GM10248 (cell line): ENCODE measurements at regions of chr12 and their contacts with region 1.

Region 1: DNA sequence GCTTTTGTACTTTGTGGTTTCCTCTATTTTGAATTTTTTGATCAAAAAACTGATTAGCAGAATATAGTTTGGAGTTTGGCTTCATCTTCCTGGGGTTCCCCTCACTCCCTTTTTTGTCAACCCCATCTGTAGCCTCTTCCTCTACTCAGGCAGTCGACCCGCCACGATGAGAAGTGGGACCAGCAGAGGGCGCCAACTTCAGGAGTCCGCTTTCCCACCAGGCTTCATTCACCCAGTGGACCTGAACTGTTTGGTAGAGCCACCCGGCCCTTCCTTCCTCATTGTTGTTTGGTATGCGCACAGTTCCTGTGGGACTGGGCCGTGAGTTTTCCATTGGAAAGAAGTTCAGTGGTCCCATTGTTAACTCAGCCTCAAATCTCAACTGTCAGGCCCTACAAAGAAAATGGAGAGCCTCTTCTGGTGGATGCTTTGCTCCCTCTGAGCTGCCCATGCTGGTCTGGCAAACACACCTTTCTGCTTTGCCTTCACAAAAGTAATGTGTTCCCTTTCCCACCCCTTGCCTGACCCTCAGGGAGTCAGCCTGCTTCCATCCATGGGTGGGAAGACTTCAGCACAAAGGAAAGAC is 21.7 kb downstream of the TMBIM6 start:
- DNase-seq: peak; percentile 78
- CTCF ChIP-seq: peak; percentile 85

Region 2: DNA sequence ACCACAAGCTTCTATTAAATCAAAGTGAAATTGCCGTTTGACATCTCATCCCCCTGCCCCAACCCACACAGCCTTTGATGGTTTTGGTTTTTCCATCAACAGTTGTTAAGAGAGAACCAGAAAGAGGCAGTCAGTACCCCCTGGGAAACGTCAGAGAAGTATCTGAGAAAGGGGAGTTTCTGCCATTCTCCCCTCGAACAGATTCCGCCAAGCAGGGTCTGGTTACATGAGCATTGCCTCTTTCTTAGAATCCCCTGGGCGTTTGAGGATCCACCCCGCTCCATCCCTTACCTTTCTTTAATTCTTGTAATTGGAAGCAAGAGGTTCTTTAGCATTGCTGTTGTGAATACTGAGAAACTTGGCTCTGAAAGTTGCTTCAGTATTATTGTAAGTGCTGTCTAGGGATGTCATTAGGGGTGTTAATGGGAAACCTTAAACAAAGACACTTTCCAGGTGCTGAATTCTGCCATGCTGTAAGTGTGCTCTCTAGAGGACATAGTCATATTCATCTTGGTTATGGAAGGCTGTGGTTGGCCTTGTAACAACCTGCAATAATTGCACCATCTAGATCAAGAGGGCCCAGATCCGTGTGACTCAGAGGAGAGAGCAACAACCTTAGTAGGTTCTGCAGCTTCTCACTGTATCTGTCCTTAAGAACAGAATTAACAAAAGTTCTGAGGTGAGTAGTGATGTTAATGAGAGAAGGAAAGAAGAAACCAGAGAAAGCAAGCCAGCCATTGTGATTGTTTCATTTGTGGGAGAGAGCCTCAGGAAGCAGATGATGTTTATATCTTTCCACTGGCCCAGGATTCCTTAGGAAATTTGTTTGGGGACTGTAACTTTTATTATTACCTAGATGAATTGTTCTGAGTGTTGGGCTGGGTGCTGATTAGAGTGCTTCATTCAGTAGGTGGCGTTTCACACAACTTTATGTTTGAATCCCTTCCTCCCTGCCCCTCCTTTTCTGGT is 12.8 kb before region 1 on chr12:
- CTCF ChIA-PET with region 1: interaction called, 51 read pairs
- POLR2A ChIA-PET with region 1: interaction called, 5 read pairs
- DNase-seq: no peak
- CTCF ChIP-seq: peak; percentile 21

Region 3: GRCh38 chr12:49776413-49776812 is 13.3 kb after region 1 on chr12:
- CTCF ChIA-PET with region 1: interaction called, 47 read pairs
- POLR2A ChIA-PET with region 1: no interaction called
- DNase-seq: peak; percentile 78
- CTCF ChIP-seq: peak; percentile 79

Region 4: DNA sequence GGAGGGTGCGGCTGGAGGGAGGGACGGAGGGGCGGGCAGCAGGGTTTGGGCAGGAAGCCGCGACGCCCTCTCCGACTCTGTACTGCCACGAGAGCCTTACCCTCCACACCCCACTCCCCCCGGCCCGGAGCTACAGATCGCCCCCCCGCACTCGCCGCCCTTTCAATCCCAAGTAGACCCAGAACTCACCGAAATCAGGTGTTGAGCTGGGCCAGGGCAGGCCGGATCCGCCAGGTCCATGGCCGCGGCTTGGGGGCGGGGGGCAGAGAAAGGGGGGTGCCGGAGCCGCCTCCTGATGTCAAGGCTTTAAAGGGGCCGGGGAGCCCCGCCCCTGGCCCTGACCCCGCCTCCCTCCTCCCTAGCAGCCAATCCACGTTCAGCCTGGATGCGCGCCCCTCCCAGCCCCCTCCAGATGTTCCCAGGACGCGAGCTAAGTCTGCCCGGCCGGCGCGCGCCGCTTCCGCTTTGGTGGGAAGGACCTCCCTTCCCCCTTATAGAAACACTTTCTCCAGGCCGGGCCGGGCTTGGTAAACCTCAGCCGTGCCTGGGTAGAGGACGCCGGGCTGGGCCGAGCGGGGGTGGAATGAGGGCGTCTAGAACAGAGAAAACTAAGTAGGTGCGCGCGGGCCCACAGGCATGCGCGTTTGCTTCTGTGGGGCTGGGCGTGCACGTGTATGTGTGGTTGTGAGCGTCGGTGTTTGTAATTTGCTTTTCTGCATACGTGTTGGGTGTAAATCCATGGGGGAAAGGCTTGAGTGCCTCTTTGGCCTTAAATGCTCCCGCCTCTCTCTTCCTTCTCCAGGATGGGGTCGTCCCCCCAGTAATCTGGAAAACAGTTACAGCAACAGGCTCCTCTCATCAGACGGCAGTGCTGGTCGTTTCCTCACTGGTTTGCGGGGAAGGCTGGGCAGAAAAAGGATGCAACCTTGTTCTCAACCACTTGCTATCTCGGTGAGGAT is 65.3 kb after region 1 on chr12 and contains the start of gene NCKAP5L:
- CTCF ChIA-PET with region 1: interaction called, 13 read pairs
- POLR2A ChIA-PET with region 1: no interaction called
- DNase-seq: peak; percentile 99
- CTCF ChIP-seq: no peak